ENCODE measurements at regions of chr17 and their contacts with region 1.

Region 1: GRCh38 chr17:8131844-8132441 is 8.0 kb upstream of the HES7 start:
- DNase-seq: no peak
- H3K27ac ChIP-seq: no peak overlapping the region
- CTCF ChIP-seq: no peak

Region 2: DNA sequence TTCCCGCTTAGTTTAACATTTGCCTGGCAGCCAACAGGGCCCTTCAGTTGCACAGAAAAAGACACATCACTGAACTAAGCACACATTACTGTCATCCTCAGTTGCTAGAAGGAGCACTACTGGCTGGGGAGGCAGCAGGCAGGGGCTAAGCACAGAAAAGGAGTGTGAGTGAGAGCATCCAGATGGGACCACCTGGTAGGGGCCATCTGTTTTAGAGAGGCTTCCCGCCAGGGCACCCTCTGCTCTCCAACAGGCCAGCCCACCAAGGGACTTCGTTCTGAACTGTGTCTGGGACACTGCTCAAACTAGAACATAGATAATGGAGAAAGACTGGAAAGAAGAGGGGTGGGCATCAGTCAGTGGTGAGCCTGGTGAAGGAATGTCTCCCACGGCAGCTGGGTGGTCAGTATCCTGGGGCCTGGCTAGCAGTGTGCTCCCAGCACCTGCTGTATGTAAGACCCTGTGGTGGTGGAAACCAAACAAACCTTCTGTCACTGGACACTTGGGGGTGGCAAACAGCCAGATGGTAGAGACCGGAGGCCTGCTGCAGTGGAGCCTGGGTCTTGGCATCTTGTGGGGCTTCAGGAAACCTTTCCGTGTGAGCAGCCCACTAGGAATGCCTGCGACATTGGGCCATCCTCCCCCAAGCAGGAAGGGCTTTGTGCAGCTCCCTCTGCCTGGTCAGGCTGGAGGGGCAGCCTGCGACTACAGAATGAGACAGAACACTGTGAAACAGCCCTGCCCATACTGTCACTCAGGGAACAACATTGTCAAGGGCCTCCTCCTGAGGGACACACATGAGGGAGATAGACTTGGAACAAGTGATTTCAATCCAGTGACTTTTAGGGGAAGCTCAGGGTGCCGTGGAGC is 143.7 kb after region 1 on chr17:
- CTCF ChIA-PET with region 1: no interaction called
- POLR2A ChIA-PET with region 1: interaction called, 10 read pairs
- DNase-seq: no peak
- H3K27ac ChIP-seq: no peak overlapping the region
- CTCF ChIP-seq: no peak

Measured in RWPE1 (cell line).